Esophagus muscularis mucosa (tissue), 4 donors: ENCODE measurements at regions of chr14 and their contacts with region 1.

Region 1: DNA sequence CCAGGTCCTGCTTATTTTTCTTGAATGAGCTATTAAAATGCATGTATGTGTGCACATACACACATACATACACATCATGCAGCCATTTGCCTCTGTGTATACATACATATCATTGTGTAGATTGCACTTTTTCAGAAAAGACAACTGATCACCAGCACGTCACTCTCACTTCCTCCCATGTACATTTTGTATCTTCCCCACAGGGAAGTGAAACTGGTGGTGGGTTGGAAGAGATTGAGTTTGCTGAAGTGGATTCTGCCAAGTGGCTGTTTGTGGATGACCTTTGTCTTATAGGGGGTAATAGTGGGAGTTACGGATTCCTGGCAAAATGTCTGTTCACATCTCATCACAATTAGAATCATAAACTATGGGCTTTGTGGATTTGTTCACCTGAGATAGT is 448.6 kb downstream of the RAD51B start:
- DNase-seq: no peak
- H3K4me3 ChIP-seq: no peak overlapping the region
- H3K27ac ChIP-seq: peak overlapping the region in 3 of 4 donors; percentile 16 to 56 (median 24)
- H3K4me1 ChIP-seq: peaks cover 0 to 47% (median 37%) of the 10 kb centered on the region in 4 donors
- H3K27me3 ChIP-seq: no peaks in the 10 kb centered on the region
- CTCF ChIP-seq: no peak
- EP300 ChIP-seq: no peak
- POLR2A ChIP-seq: no peak

Region 2: GRCh38 chr14:68377459-68377858 is 109.3 kb after region 1 on chr14:
- intact Hi-C with region 1: loop called (anchors 10 kb)
- DNase-seq: no peak
- H3K4me3 ChIP-seq: no peak overlapping the region
- H3K27ac ChIP-seq: peak overlapping the region; percentile 49 to 69 (median 58)
- H3K4me1 ChIP-seq: peaks cover 24 to 42% (median 38%) of the 10 kb centered on the region in 4 donors
- H3K27me3 ChIP-seq: no peaks in the 10 kb centered on the region
- CTCF ChIP-seq: no peak
- EP300 ChIP-seq: no peak
- POLR2A ChIP-seq: no peak